Transverse colon (tissue), 4 donors: ENCODE measurements at regions of chr20 and their contacts with region 1.

Region 1: GRCh38 chr20:33309631-33310030 is 26.6 kb downstream of the BPIFB1 start:
- DNase-seq: no peak
- H3K4me3 ChIP-seq: no peak overlapping the region
- H3K27ac ChIP-seq: no peak overlapping the region
- H3K4me1 ChIP-seq: no peaks in the 10 kb centered on the region
- H3K27me3 ChIP-seq: no peaks in the 10 kb centered on the region
- CTCF ChIP-seq: no peak
- EP300 ChIP-seq: no peak
- POLR2A ChIP-seq: no peak

Region 2: GRCh38 chr20:33262658-33263065 is 47.0 kb before region 1 on chr20:
- in situ Hi-C with region 1: no loop called
- intact Hi-C with region 1: loop called (anchors 1 kb)
- DNase-seq: no peak
- H3K4me3 ChIP-seq: no peak overlapping the region
- H3K27ac ChIP-seq: no peak overlapping the region
- H3K4me1 ChIP-seq: no peaks in the 10 kb centered on the region
- H3K27me3 ChIP-seq: peaks cover 10% of the 10 kb centered on the region
- CTCF ChIP-seq: peak in 3 of 5 experiments; percentile 16 to 35 (median 20)
- EP300 ChIP-seq: no peak
- POLR2A ChIP-seq: no peak

Region 3: DNA sequence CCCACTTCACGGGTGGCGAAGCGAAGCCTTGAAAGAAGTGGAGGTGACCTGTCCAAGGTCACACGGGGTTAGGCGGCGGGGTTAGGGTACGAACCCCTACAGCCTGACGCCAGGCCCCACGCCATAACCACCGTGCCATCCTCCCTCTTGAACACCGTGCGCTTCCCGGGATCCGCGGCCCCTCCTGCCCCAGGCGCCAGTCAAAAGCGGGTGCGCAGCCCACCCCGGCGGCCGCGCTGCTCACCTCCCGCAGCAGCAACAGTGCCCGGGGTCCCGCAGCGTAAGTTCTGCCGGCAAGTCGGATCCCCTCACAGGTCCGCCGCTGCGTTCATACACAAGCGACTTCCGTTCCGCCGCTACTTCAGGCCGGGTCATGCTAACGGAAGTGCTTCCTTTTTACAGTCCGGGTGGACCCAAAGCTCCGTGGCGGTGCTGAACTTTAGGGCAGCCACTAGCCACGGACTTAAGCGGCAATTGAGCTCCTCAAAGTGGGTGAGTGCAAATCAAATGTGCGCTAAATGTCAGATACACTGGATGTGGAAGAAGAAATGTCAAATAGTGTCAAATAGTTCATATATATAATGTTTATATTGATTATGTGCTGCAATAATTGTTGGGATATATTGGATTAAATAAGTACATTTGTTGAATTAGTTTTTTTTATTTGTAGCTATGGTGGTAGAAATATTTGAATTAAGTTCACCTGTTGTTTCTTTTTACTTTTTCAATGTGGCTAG is 91.7 kb after region 1 on chr20 and contains the start of gene CDK5RAP1:
- in situ Hi-C with region 1: no loop called
- intact Hi-C with region 1: no loop called
- DNase-seq: peak; percentile 88
- H3K4me3 ChIP-seq: peak within 1 kb of the TSS; percentile 68 to 81 (median 80)
- H3K27ac ChIP-seq: peak within 1 kb of the TSS; percentile 65 to 84 (median 74)
- H3K4me1 ChIP-seq: peaks cover 19 to 29% (median 24%) of the 10 kb centered on the region in 4 donors
- H3K27me3 ChIP-seq: no peaks in the 10 kb centered on the region
- CTCF ChIP-seq: no peak
- EP300 ChIP-seq: no peak
- POLR2A ChIP-seq: no peak
- total RNA-seq, gene CDK5RAP1: 8.6 to 21.3 (median 20.3) TPM